B cell (primary cell): ENCODE measurements at regions of chr21 and their contacts with region 1.

Region 1: GRCh38 chr21:33199516-33200217 is 30.1 kb upstream of the IFNAR2 start:
- DNase-seq: peak; percentile 90
- ATAC-seq: peak; percentile 94
- H3K4me3 ChIP-seq: no peak overlapping the region
- H3K4me3 Mint-ChIP-seq: no peak overlapping the region
- H3K27ac ChIP-seq: peak overlapping the region in 1 of 2 donors; percentile 39
- H3K27ac Mint-ChIP-seq: peak overlapping the region; percentile 51
- H3K4me1 ChIP-seq: peaks cover 20 to 25% of the 10 kb centered on the region in 2 donors
- H3K4me1 Mint-ChIP-seq: peaks cover 30% of the 10 kb centered on the region
- H3K27me3 ChIP-seq: no peaks in the 10 kb centered on the region
- H3K27me3 Mint-ChIP-seq: peaks cover 15% of the 10 kb centered on the region
- CTCF ChIP-seq: peak; percentile 86

Region 2: DNA sequence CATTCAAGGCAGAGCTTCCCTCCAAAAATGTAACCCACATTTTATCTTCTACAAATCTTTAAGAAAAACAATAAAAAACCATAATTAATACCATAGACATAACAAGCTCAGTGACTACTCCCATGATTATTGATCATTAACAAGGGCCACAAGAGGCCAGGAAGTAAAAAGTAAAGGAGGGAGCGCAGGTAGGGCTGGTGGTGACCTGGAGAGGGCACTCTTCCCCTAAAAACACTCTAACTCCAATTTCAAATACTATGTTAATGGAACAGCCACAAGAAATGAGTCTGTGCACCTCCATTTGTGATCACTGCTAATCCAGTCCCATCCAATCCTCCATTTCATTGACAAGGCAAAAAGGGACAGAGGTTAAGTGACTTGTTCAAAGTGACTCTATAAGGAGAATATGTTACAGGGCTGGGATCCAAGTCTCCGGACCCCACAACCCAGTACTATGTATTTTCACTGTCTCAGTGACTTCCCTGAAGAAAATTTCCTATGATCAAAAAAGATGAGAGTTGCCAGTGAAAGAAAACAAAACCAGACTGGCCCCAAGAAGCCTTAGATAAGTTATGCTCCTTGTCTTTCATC is 546.3 kb before region 1 on chr21:
- CTCF ChIA-PET with region 1: interaction called, 10 read pairs
- POLR2A ChIA-PET with region 1: no interaction called
- intact Hi-C with region 1: no loop called
- DNase-seq: peak; percentile 56
- ATAC-seq: peak; percentile 39
- H3K4me3 ChIP-seq: no peak overlapping the region
- H3K4me3 Mint-ChIP-seq: no peak overlapping the region
- H3K27ac ChIP-seq: no peak overlapping the region
- H3K27ac Mint-ChIP-seq: no peak overlapping the region
- H3K4me1 ChIP-seq: no peaks in the 10 kb centered on the region
- H3K4me1 Mint-ChIP-seq: no peaks in the 10 kb centered on the region
- H3K27me3 ChIP-seq: no peaks in the 10 kb centered on the region
- H3K27me3 Mint-ChIP-seq: no peaks in the 10 kb centered on the region
- CTCF ChIP-seq: peak; percentile 75

Region 3: DNA sequence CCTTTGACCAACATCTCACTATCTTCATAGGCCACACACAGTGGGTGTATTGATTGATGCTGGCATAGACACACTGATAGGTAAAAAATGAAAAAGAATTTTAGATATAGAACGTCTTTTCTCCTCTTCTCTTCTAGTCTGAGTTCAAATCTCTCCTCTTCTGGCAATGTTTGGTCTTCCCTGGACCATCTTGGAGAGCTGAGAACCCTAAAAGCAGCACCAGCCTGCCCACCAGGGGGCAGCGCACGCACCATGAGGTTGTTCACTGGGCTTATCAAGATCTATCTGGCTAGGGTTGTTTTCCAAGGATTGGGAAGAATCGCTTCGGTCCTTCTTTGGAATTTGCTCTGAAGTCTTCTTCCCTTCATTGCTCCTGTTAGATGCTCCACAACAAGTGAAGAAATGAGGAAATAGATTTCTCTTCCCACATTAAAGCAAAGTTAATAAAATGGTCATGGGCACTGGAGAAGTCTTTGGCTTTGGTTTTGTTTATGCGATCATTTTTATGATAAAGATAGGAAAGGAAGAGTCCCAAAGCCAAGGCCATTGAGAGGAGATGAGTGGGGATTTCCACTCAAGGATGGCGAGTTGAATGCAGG is 277.9 kb before region 1 on chr21:
- CTCF ChIA-PET with region 1: interaction called, 43 read pairs
- POLR2A ChIA-PET with region 1: no interaction called
- intact Hi-C with region 1: loop called (anchors 1 kb)
- DNase-seq: peak; percentile 58
- ATAC-seq: no peak
- H3K4me3 ChIP-seq: no peak overlapping the region
- H3K4me3 Mint-ChIP-seq: no peak overlapping the region
- H3K27ac ChIP-seq: no peak overlapping the region
- H3K27ac Mint-ChIP-seq: no peak overlapping the region
- H3K4me1 ChIP-seq: no peaks in the 10 kb centered on the region
- H3K4me1 Mint-ChIP-seq: no peaks in the 10 kb centered on the region
- H3K27me3 ChIP-seq: peaks cover 0 to 5% (median 2%) of the 10 kb centered on the region in 4 experiments
- H3K27me3 Mint-ChIP-seq: peaks cover 32% of the 10 kb centered on the region
- CTCF ChIP-seq: peak; percentile 77

Region 4: GRCh38 chr21:32978341-32979270 is 221.1 kb before region 1 on chr21:
- CTCF ChIA-PET with region 1: no interaction called
- POLR2A ChIA-PET with region 1: no interaction called
- intact Hi-C with region 1: no loop called
- DNase-seq: no peak
- ATAC-seq: no peak
- H3K4me3 ChIP-seq: no peak overlapping the region
- H3K4me3 Mint-ChIP-seq: no peak overlapping the region
- H3K27ac ChIP-seq: no peak overlapping the region
- H3K27ac Mint-ChIP-seq: no peak overlapping the region
- H3K4me1 ChIP-seq: no peaks in the 10 kb centered on the region
- H3K4me1 Mint-ChIP-seq: no peaks in the 10 kb centered on the region
- H3K27me3 ChIP-seq: peaks cover 0 to 26% (median 1%) of the 10 kb centered on the region in 4 experiments
- H3K27me3 Mint-ChIP-seq: peaks cover 39% of the 10 kb centered on the region
- CTCF ChIP-seq: no peak

Region 5: GRCh38 chr21:33162436-33162951 is 37.2 kb before region 1 on chr21:
- CTCF ChIA-PET with region 1: no interaction called
- POLR2A ChIA-PET with region 1: no interaction called
- intact Hi-C with region 1: no loop called
- DNase-seq: no peak
- ATAC-seq: no peak
- H3K4me3 ChIP-seq: no peak overlapping the region
- H3K4me3 Mint-ChIP-seq: no peak overlapping the region
- H3K27ac ChIP-seq: no peak overlapping the region
- H3K27ac Mint-ChIP-seq: no peak overlapping the region
- H3K4me1 ChIP-seq: no peaks in the 10 kb centered on the region
- H3K4me1 Mint-ChIP-seq: no peaks in the 10 kb centered on the region
- H3K27me3 ChIP-seq: peaks cover 0 to 29% (median 12%) of the 10 kb centered on the region in 4 experiments
- H3K27me3 Mint-ChIP-seq: peaks cover 40% of the 10 kb centered on the region
- CTCF ChIP-seq: no peak

Region 6: GRCh38 chr21:33185852-33186251 is 13.8 kb before region 1 on chr21:
- CTCF ChIA-PET with region 1: interaction called, 18 read pairs
- POLR2A ChIA-PET with region 1: no interaction called
- intact Hi-C with region 1: no loop called
- DNase-seq: no peak
- ATAC-seq: no peak
- H3K4me3 ChIP-seq: no peak overlapping the region
- H3K4me3 Mint-ChIP-seq: no peak overlapping the region
- H3K27ac ChIP-seq: no peak overlapping the region
- H3K27ac Mint-ChIP-seq: no peak overlapping the region
- H3K4me1 ChIP-seq: peaks cover 6 to 14% of the 10 kb centered on the region in 2 donors
- H3K4me1 Mint-ChIP-seq: peaks cover 17% of the 10 kb centered on the region
- H3K27me3 ChIP-seq: peaks cover 0 to 6% (median 5%) of the 10 kb centered on the region in 4 experiments
- H3K27me3 Mint-ChIP-seq: peaks cover 35% of the 10 kb centered on the region
- CTCF ChIP-seq: no peak

Region 7: GRCh38 chr21:33266050-33266788 is 66.6 kb after region 1 on chr21 and contains the start of gene IL10RB:
- CTCF ChIA-PET with region 1: interaction called, 17 read pairs
- POLR2A ChIA-PET with region 1: interaction called, 9 read pairs
- intact Hi-C with region 1: loop called (anchors 1 kb)
- DNase-seq: peak; percentile 87
- ATAC-seq: peak; percentile 77
- H3K4me3 ChIP-seq: peak within 1 kb of the TSS; percentile 71 to 94 (median 88)
- H3K4me3 Mint-ChIP-seq: peak within 1 kb of the TSS; percentile 98
- H3K27ac ChIP-seq: peak within 1 kb of the TSS; percentile 82 to 91
- H3K27ac Mint-ChIP-seq: peak within 1 kb of the TSS; percentile 95
- H3K4me1 ChIP-seq: peaks cover 35 to 56% of the 10 kb centered on the region in 2 donors
- H3K4me1 Mint-ChIP-seq: peaks cover 55% of the 10 kb centered on the region
- H3K27me3 ChIP-seq: no peaks in the 10 kb centered on the region
- H3K27me3 Mint-ChIP-seq: no peaks in the 10 kb centered on the region
- CTCF ChIP-seq: no peak
- total RNA-seq, gene IL10RB: 32.5 and 35.5 TPM in 2 replicates

Region 8: DNA sequence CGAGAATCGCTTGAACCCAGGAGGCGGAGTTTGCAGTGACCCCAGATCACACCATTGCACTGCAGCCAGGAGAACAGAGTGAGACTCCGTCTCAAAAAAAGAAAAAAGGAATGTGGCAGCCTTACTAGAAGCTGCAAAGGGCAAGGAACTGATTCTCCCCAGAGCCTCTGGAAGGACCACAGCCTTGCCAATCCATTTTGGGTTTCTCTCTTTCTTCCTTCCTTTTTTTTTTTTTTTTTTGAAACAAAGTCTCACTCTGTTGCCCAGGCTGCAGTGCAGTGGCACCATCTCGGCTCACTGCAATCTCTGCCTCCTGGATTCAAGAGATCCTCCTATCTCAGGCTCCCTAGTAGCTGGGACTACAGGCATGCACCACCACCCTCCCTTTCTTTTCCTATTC is 193.7 kb after region 1 on chr21:
- CTCF ChIA-PET with region 1: no interaction called
- POLR2A ChIA-PET with region 1: no interaction called
- intact Hi-C with region 1: no loop called
- DNase-seq: no peak
- ATAC-seq: no peak
- H3K4me3 ChIP-seq: no peak overlapping the region
- H3K4me3 Mint-ChIP-seq: no peak overlapping the region
- H3K27ac ChIP-seq: no peak overlapping the region
- H3K27ac Mint-ChIP-seq: no peak overlapping the region
- H3K4me1 ChIP-seq: peaks cover 25 to 37% of the 10 kb centered on the region in 2 donors
- H3K4me1 Mint-ChIP-seq: peaks cover 46% of the 10 kb centered on the region
- H3K27me3 ChIP-seq: no peaks in the 10 kb centered on the region
- H3K27me3 Mint-ChIP-seq: no peaks in the 10 kb centered on the region
- CTCF ChIP-seq: no peak

Region 9: DNA sequence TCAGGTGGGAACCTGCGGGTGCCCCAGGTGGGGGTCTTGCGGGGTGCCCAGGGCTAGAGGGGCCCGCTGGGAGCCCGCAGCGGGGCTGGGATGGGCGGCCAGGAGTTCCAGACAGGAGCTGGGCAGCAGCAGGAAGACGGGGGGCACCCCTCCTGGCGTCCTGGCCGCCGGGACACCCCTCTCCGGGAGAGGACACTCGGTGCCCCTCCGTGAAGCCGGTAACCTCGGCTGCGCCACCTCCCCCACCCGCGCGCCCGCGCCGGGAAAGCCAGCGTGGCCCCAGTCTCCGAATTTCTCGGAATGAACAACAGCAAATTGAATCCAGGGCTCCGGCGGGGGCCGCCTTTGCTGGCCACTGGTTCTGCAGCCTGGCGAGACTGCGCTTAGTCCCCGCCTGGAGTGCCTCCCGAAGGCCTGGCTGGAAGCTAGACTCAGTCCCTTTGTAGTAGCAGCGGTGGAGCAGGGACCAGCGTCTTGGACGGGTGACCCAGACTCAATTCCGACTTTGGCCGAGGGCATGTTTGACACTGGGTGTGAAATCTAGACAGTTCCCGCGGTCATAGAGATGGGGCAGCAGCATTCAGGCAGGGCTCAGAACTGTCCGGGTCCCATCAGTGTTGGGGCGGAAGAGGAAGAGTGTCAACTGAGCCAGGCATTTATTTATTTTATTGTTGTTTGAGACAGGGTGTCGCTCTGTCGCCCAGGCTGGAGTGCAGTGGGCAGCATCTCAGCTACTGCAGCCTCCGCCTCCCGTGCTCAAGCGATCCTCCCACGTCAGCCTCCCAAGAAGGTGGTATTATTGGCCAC is 204.3 kb after region 1 on chr21:
- CTCF ChIA-PET with region 1: interaction called, 13 read pairs
- POLR2A ChIA-PET with region 1: no interaction called
- intact Hi-C with region 1: no loop called
- DNase-seq: peak; percentile 67
- ATAC-seq: peak; percentile 39
- H3K4me3 ChIP-seq: peak overlapping the region; percentile 85 to 94 (median 91)
- H3K4me3 Mint-ChIP-seq: peak overlapping the region; percentile 100
- H3K27ac ChIP-seq: peak overlapping the region; percentile 75 to 83
- H3K27ac Mint-ChIP-seq: peak overlapping the region; percentile 99
- H3K4me1 ChIP-seq: peaks cover 59 to 81% of the 10 kb centered on the region in 2 donors
- H3K4me1 Mint-ChIP-seq: peaks cover 71% of the 10 kb centered on the region
- H3K27me3 ChIP-seq: no peaks in the 10 kb centered on the region
- H3K27me3 Mint-ChIP-seq: no peaks in the 10 kb centered on the region
- CTCF ChIP-seq: no peak

Region 10: GRCh38 chr21:33458861-33459260 is 259.2 kb after region 1 on chr21:
- CTCF ChIA-PET with region 1: interaction called, 10 read pairs
- POLR2A ChIA-PET with region 1: no interaction called
- intact Hi-C with region 1: no loop called
- DNase-seq: no peak
- ATAC-seq: no peak
- H3K4me3 ChIP-seq: no peak overlapping the region
- H3K4me3 Mint-ChIP-seq: no peak overlapping the region
- H3K27ac ChIP-seq: no peak overlapping the region
- H3K27ac Mint-ChIP-seq: no peak overlapping the region
- H3K4me1 ChIP-seq: no peaks in the 10 kb centered on the region
- H3K4me1 Mint-ChIP-seq: no peaks in the 10 kb centered on the region
- H3K27me3 ChIP-seq: no peaks in the 10 kb centered on the region
- H3K27me3 Mint-ChIP-seq: no peaks in the 10 kb centered on the region
- CTCF ChIP-seq: no peak